MCF 10A (cell line): ENCODE measurements at regions of chr5 and their contacts with region 1.

Region 1: DNA sequence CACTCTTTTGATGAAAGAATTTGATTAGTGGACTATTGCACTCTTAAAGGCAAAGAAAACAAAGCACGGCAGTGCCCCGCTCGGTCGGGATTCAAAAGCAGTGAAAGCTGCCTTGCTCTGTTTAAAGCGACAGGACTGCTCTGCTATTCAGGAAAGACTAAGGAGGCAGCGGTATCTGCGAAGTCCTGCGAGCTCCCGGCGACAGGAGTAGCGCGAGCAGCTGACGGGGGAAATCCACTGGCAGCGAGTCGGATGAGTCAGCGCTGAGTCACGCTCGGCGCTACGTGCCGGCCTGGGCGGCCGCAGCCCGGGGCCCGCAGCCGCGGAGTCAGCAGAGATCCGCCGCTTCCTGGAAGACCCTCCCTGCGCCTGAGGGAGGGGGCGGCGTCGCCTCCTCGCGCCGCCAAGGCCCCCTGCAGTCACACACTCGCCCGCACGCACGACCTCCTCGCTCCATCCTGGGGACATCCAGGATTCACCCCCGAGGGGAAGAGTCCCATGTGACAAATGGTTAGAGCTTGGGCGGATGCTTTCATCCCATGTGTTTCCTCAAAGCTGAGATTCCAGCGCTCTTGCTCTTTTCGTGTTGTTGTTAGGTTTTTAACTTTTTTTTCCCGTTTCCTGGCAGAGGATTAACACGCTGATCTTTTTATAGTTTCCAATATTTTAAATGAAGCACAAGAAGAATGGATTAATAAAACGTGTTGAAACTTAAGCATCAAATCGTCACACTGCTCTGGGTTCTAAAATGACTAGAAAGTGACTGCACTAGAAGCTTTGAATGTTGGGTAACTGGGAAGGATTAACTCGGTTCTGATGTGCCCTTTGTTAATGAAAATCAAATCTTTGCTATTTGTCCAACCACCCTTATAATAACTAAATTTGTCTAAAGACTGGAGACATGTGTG is 102.5 kb downstream of the ARRDC3 start:
- DNase-seq: peak; percentile 96
- H3K4me3 Mint-ChIP-seq: peak overlapping the region; percentile 86
- H3K27ac Mint-ChIP-seq: peak overlapping the region; percentile 98
- H3K4me1 Mint-ChIP-seq: peaks cover 19% of the 10 kb centered on the region
- H3K27me3 Mint-ChIP-seq: no peaks in the 10 kb centered on the region
- CTCF ChIP-seq: no peak

Region 2: DNA sequence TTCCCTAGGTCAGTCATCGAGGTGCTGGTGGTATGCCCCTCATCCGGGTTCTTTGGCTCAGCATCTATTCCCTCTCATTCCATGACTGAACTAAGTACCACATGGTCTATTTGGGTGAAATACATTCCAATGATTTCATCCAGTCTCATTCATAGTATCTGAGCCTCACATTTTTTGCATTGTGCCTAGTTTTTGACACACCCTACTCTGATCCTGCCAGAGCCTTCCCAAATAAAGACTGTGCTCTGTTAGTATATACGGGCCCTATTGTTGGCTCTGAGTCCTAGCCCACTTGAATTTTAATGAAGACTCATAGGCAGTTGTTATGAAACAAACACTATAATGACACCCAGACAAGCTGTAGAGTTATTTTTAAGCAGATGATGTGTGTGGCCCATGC is 1611.8 kb before region 1 on chr5:
- CTCF ChIA-PET with region 1: no interaction called
- POLR2A ChIA-PET with region 1: no interaction called
- intact Hi-C with region 1: no loop called
- DNase-seq: no peak
- H3K4me3 Mint-ChIP-seq: no peak overlapping the region
- H3K27ac Mint-ChIP-seq: no peak overlapping the region
- H3K4me1 Mint-ChIP-seq: no peaks in the 10 kb centered on the region
- H3K27me3 Mint-ChIP-seq: no peaks in the 10 kb centered on the region
- CTCF ChIP-seq: no peak

Region 3: DNA sequence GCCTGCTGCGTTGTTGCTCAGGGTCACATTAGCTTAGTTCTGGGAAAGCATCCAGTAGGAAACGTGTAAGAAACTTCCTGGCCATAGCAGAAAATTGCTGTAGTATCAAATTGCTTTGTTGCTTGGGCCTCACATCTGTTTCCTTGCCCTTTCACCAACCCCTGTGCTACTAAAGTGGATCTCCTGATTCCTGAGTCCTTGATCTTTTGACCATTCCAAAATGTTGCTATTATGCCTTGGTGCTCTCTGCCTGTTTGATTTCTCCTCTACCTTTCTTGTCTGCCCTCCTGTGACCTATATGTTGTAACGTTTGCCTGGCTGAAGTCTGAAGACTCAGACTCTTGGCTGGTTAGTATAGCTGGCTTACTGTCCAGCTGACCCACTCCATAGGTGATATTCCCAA is 371.5 kb before region 1 on chr5:
- CTCF ChIA-PET with region 1: no interaction called
- POLR2A ChIA-PET with region 1: no interaction called
- intact Hi-C with region 1: no loop called
- DNase-seq: peak; percentile 20
- H3K4me3 Mint-ChIP-seq: no peak overlapping the region
- H3K27ac Mint-ChIP-seq: no peak overlapping the region
- H3K4me1 Mint-ChIP-seq: peaks cover 6% of the 10 kb centered on the region
- H3K27me3 Mint-ChIP-seq: no peaks in the 10 kb centered on the region
- CTCF ChIP-seq: no peak

Region 4: DNA sequence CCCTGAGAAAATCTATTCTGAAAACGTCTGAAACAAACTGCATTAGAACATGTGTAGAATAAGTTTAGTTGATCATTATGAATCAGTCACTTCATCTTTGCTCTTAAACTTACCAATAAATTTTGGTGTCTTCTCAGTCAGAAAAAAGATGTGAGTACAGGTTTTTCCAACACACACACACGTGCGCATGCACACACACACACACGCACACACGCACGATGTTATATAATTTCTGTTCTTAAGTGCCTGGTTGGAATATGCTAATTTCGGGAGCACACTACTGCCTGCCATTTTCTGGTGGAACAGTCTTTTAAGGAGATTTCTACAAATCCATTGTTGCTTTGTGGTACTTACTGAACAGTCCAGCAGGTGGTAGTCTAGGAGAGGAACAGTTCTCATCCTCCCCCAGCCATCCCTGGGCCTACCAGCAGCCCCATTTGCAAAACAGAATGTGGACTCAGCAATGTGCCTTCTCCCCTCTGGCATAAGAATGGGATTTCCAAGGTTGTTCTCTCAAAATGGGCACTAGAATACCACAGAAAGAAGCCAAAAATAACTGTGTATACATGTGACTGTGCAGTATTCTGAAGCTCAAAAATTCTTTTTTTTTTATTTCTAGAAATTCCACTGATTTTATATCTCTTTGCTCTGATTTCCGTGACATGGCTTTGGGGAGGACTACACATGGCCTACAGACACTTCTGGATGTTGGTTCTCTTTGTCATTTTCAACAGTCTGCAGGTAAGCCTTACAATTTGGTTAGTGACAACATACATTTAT is 178.8 kb before region 1 on chr5:
- CTCF ChIA-PET with region 1: no interaction called
- POLR2A ChIA-PET with region 1: interaction called, 5 read pairs
- intact Hi-C with region 1: loop called (anchors 1 kb)
- DNase-seq: peak; percentile 83
- H3K4me3 Mint-ChIP-seq: no peak overlapping the region
- H3K27ac Mint-ChIP-seq: no peak overlapping the region
- H3K4me1 Mint-ChIP-seq: peaks cover 25% of the 10 kb centered on the region
- H3K27me3 Mint-ChIP-seq: no peaks in the 10 kb centered on the region
- CTCF ChIP-seq: peak; percentile 87

Region 5: DNA sequence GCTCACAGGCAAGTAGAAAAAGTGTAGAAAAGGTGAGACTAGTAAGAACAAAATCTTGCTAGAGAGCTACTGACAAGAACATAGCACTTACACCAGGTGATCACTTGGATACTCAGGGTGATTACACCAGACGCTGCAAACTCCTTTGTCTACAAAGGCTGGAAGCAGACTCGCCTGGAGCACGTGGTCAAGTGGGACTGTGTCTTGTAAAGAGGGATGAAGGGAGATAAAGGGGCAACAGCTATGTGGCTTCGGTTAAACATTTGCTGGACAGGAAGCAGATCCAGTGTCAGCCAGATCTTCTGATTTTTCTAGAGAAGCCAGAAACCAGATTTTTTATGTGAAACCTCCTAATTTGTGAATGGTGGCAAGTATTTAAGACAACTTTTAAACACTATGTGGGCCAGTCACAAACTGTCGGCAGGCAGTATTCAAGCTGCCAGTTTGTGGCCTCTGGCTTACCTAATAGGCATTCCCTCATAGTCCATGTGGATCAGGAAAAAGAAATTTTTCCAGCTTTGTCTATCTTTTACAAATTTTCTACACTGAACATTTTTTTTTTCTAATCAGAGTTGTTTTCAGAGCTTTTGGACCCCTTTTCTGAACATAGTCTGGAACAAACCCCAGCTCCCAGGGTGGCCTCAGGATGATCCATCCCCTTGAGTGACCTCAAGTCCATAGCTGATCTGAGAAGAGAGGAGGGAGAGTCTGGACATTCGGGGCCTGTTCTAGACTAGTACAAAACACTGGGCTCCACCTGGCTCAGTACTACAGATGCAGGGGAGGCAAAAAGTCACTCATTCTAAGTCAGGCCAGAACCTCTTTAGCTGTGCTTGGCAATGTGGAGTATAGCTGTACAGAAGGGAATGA is 160.4 kb before region 1 on chr5:
- CTCF ChIA-PET with region 1: no interaction called
- POLR2A ChIA-PET with region 1: no interaction called
- intact Hi-C with region 1: no loop called
- DNase-seq: no peak
- H3K4me3 Mint-ChIP-seq: no peak overlapping the region
- H3K27ac Mint-ChIP-seq: peak overlapping the region; percentile 78
- H3K4me1 Mint-ChIP-seq: no peaks in the 10 kb centered on the region
- H3K27me3 Mint-ChIP-seq: no peaks in the 10 kb centered on the region
- CTCF ChIP-seq: no peak

Region 6: DNA sequence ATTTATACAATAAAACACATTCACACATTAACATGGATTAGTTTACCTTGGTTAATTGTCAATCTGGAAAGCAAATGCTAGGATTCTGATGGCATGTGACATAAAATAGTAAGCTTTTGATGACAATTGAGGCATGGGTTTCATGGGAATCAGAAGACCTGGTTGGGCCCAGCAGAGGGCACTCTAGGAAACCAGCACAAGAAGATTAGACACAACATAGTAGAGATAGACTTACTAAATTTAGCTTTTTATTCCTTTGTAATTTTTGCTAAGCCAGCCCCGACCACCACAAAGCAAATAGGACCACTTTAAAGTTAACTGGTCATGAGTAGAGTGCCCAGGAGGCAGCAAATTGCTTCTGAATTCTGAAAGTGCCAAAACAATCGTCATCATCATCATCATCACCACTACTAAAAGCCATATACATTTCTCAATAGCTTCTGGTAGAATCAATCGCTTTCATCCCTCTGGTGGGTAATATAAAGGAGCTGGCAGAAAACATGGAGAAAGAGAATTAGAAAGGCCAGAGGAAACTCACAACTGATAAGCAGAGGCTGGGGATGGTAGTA is 60.7 kb before region 1 on chr5:
- CTCF ChIA-PET with region 1: no interaction called
- POLR2A ChIA-PET with region 1: interaction called, 16 read pairs
- intact Hi-C with region 1: no loop called
- DNase-seq: peak; percentile 22
- H3K4me3 Mint-ChIP-seq: no peak overlapping the region
- H3K27ac Mint-ChIP-seq: no peak overlapping the region
- H3K4me1 Mint-ChIP-seq: peaks cover 18% of the 10 kb centered on the region
- H3K27me3 Mint-ChIP-seq: no peaks in the 10 kb centered on the region
- CTCF ChIP-seq: no peak

Region 7: GRCh38 chr5:91266184-91266705 is 14.4 kb before region 1 on chr5:
- CTCF ChIA-PET with region 1: interaction called, 3 read pairs
- POLR2A ChIA-PET with region 1: interaction called, 15 read pairs
- intact Hi-C with region 1: no loop called
- DNase-seq: peak; percentile 49
- H3K4me3 Mint-ChIP-seq: no peak overlapping the region
- H3K27ac Mint-ChIP-seq: no peak overlapping the region
- H3K4me1 Mint-ChIP-seq: peaks cover 10% of the 10 kb centered on the region
- H3K27me3 Mint-ChIP-seq: no peaks in the 10 kb centered on the region
- CTCF ChIP-seq: no peak

Region 8: GRCh38 chr5:91301106-91301846 is 20.7 kb after region 1 on chr5:
- CTCF ChIA-PET with region 1: interaction called, 4 read pairs
- POLR2A ChIA-PET with region 1: interaction called, 75 read pairs
- intact Hi-C with region 1: loop called (anchors 1 kb)
- DNase-seq: peak; percentile 74
- H3K4me3 Mint-ChIP-seq: no peak overlapping the region
- H3K27ac Mint-ChIP-seq: peak overlapping the region; percentile 23
- H3K4me1 Mint-ChIP-seq: peaks cover 14% of the 10 kb centered on the region
- H3K27me3 Mint-ChIP-seq: no peaks in the 10 kb centered on the region
- CTCF ChIP-seq: no peak